ENCODE measurements at regions of chr17 and their contacts with region 1.

Region 1: GRCh38 chr17:77054936-77055335 is 85.8 kb upstream of the SEC14L1 start:
- DNase-seq: no peak
- ATAC-seq: no peak

Region 2: DNA sequence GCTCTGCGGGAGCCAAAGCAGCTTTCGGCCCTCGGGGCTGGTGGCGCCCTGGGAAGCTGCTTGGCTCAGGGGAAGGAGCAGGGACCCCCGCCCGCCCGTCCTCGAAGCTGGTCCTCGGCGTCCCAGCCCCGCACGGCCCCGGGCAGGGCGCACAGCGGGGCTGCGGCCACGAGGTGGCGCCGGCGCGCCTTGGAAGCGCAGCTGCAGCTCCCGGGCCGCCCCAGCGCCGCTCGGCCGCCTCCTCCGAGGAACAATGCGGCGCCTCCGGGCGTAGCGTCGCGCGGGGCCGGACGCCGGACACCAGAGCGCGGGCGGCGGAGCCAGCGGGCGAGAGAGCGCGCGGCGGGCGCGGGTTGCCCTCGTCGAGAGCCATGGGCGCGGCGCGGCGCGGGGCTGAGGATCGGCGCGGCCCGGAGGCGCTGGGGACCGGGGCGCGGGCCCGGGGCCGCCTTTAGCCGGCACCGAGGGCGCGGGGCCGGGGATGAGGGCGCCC is 186.7 kb before region 1 on chr17 and contains the start of gene MGAT5B:
- intact Hi-C with region 1: loop called (anchors 2 kb)
- DNase-seq: peak; percentile 87
- ATAC-seq: peak; percentile 97
- total RNA-seq, gene MGAT5B: 0.15 to 0.21 TPM

Region 3: DNA sequence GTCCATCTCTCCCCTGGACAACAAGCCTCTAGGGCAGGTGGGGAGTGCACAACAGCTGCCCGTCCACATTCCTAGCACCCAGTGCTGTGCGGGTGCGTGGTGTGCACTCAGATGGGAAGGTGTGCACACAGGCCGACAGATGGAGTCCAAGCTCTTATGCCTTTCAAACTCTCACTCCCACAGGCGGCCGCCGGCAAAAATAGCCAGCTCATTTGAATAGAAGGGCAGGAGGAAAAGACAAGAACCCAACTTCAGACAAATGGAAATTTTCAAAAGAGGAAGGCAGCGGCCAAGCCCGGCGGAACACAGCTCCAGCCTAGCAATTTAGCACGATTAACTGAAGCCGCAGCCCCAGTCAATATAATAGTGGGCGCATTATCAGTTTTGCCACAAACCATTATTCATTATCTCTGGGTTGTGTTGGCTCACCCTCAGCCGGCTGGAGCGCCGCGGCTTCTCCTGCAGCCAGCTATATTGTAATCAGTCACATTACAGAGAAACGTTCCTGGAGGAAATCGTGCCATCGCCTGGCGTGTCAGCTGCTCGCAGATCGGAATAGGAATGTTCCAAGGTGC is 18.0 kb before region 1 on chr17:
- intact Hi-C with region 1: no loop called
- DNase-seq: no peak
- ATAC-seq: peak in 1 of 2 donors; percentile 53

Measured in left cardiac atrium (tissue), 4 donors.